CD4-positive, alpha-beta memory T cell (primary cell): ENCODE measurements at regions of chr16 and their contacts with region 1.

Region 1: DNA sequence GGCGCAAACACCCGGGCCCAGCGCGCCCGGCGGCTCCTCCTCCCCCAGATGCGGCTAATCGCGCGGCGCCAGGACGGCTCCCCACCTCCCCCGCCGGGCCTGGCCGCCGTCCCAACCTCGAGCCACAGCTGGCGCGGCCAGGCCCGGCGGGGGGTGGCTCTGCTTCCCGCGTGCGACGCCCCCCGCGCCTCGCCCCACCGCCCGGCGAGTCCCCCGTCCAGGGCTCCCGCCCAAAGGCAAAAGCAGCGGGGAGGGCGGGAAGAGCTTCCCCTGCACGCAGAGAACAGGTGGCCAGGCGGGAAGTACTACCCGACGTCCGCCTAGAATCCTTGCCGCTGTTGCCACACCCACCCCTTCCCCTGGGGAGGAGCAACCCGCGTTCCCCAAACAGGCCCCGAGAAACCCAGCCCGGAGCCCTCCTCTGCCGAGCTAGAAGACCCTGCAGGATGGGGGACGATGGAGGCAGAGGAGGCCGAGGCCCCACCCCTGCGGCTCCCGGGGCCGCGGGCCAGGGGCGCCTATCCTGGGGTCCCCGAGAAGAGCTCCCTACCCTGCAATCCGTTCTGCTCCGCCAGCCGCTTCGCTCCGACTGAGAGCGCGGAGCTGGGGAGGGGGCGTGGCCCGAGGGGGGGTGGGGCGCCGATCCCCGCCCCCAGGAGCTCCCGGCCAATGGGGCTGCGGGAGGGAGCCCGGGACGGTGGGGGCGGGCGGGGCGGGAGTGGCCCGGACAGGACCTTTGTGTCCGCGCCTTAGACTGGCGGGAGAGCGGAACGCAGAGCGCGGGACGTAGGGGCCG is at the start of gene CARHSP1:
- DNase-seq: peak; percentile 71 to 80 (median 77)
- H3K4me3 ChIP-seq: peak within 1 kb of the TSS; percentile 54 to 81
- H3K4me3 Mint-ChIP-seq: peak within 1 kb of the TSS; percentile 93 to 97 (median 94)
- H3K27ac ChIP-seq: peak within 1 kb of the TSS; percentile 54
- H3K27ac Mint-ChIP-seq: peak within 1 kb of the TSS; percentile 85 to 97 (median 93)
- H3K4me1 ChIP-seq: peaks cover 54% of the 10 kb centered on the region
- H3K4me1 Mint-ChIP-seq: peaks cover 25 to 57% (median 45%) of the 10 kb centered on the region in 4 donors
- H3K27me3 ChIP-seq: no peaks in the 10 kb centered on the region
- H3K27me3 Mint-ChIP-seq: no peaks in the 10 kb centered on the region
- total RNA-seq, gene CARHSP1: 39.3 to 43.2 TPM

Region 2: DNA sequence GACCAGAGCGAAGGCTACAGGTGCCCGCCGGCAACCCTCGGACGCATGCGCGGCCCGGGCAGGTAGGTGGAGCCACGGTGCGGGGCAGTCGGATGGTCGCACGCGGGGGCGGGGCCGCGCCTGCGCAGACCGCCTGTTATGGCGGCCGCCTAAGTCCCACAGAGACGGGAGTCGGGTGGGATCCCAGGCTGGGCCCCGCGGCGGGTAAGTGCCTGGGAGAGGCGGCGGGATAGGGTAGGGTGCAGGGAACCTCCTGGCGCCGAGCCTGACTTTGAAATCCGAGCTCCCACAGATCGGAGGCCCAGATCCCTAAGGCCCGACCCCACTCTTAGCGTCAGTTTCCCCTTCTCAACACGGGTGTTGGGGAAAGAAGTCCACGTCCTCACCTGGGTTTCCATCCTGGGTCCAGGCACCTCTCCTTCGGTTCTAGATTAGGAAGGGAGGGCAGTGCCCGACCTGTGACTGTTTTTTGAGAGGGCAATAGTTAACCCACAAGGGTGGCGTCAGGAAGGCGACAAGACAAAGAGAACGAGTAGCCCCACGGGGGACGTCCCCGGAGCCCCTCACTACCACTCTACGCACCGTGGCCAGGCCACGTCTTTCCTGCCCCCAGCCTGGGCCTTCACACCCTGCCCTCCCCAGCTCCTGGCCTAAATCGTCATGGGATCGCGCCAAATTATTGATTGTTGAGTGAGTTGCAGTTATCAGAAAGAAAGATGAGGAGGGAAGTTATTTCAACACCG is 246.9 kb before region 1 on chr16 and contains the start of gene METTL22:
- CTCF ChIA-PET with region 1: no interaction called
- POLR2A ChIA-PET with region 1: no interaction called
- intact Hi-C with region 1: loop called (anchors 1 kb)
- DNase-seq: peak; percentile 87 to 90 (median 90)
- H3K4me3 ChIP-seq: peak within 1 kb of the TSS; percentile 71 to 96
- H3K4me3 Mint-ChIP-seq: peak within 1 kb of the TSS; percentile 89 to 98 (median 94)
- H3K27ac ChIP-seq: peak within 1 kb of the TSS; percentile 92
- H3K27ac Mint-ChIP-seq: peak within 1 kb of the TSS; percentile 77 to 94 (median 91)
- H3K4me1 ChIP-seq: peaks cover 15% of the 10 kb centered on the region
- H3K4me1 Mint-ChIP-seq: peaks cover 11 to 32% (median 15%) of the 10 kb centered on the region in 4 donors
- H3K27me3 ChIP-seq: no peaks in the 10 kb centered on the region
- H3K27me3 Mint-ChIP-seq: peaks cover 0 to 5% of the 10 kb centered on the region in 2 donors
- total RNA-seq, gene METTL22: 42.9 to 49.8 TPM

Region 3: DNA sequence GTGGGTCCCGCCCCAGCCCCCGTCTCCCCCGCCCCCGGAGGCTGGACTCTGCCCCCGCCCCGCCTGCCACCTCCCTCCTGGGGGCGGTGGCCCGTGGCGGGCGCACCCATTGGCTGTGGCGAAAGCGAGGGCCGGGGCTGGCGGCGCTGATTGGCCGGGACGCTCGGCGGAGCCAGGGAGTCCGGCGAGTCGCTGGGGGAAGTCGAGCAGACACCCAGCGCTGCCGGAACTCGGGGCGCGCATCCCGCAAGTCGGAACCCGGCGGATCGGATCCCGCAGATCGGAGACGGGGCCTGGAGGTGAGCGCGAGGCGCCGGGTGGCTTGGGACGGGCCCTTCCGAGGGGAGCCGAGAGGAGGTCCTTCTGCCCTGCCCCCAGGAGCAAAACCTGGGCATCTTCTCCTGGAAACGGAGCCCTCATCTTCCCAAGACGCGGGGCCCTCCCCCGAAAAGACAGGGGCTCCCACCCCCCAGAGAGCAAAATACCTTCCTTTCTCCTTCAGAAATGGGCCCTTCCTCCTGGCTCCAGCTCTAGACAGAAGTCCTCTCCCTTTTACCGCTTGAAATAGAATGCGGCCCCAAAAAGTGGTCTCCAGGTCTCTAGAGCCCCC is 194.1 kb before region 1 on chr16 and contains the start of gene ABAT:
- CTCF ChIA-PET with region 1: interaction called, 4 read pairs
- POLR2A ChIA-PET with region 1: interaction called, 18 read pairs
- intact Hi-C with region 1: loop called (anchors 2 kb)
- DNase-seq: peak; percentile 85 to 92 (median 88)
- H3K4me3 ChIP-seq: peak within 1 kb of the TSS; percentile 85 to 87
- H3K4me3 Mint-ChIP-seq: peak within 1 kb of the TSS; percentile 87 to 95 (median 91)
- H3K27ac ChIP-seq: peak within 1 kb of the TSS; percentile 62
- H3K27ac Mint-ChIP-seq: peak within 1 kb of the TSS; percentile 87 to 98 (median 92)
- H3K4me1 ChIP-seq: peaks cover 17% of the 10 kb centered on the region
- H3K4me1 Mint-ChIP-seq: peaks cover 8 to 24% (median 16%) of the 10 kb centered on the region in 4 donors
- H3K27me3 ChIP-seq: no peaks in the 10 kb centered on the region
- H3K27me3 Mint-ChIP-seq: no peaks in the 10 kb centered on the region
- total RNA-seq, gene ABAT: 10.0 to 10.8 TPM

Region 4: GRCh38 chr16:8797364-8798173 is 71.0 kb before region 1 on chr16 and contains the starts of genes PMM2 and TMEM186:
- CTCF ChIA-PET with region 1: no interaction called
- POLR2A ChIA-PET with region 1: interaction called, 32 read pairs
- intact Hi-C with region 1: loop called (anchors 1 kb)
- DNase-seq: peak; percentile 93 to 97 (median 94)
- H3K4me3 ChIP-seq: peak within 1 kb of the TSS; percentile 73 to 97
- H3K4me3 Mint-ChIP-seq: peak within 1 kb of the TSS; percentile 93 to 98 (median 95)
- H3K27ac ChIP-seq: peak within 1 kb of the TSS; percentile 81
- H3K27ac Mint-ChIP-seq: peak within 1 kb of the TSS; percentile 88 to 97 (median 94)
- H3K4me1 ChIP-seq: peaks cover 44% of the 10 kb centered on the region
- H3K4me1 Mint-ChIP-seq: peaks cover 24 to 55% (median 33%) of the 10 kb centered on the region in 4 donors
- H3K27me3 ChIP-seq: no peaks in the 10 kb centered on the region
- H3K27me3 Mint-ChIP-seq: no peaks in the 10 kb centered on the region
- total RNA-seq, gene PMM2: 51.7 to 61.7 TPM
- total RNA-seq, gene TMEM186: 15.6 to 17.9 TPM

Region 5: GRCh38 chr16:8818504-8819270 is 49.9 kb before region 1 on chr16:
- CTCF ChIA-PET with region 1: interaction called, 3 read pairs
- POLR2A ChIA-PET with region 1: interaction called, 10 read pairs
- intact Hi-C with region 1: loop called (anchors 5 kb)
- DNase-seq: no peak
- H3K4me3 ChIP-seq: no peak overlapping the region
- H3K4me3 Mint-ChIP-seq: no peak overlapping the region
- H3K27ac ChIP-seq: no peak overlapping the region
- H3K27ac Mint-ChIP-seq: peak overlapping the region in 1 of 7 donors; percentile 80
- H3K4me1 ChIP-seq: peaks cover 13% of the 10 kb centered on the region
- H3K4me1 Mint-ChIP-seq: peaks cover 11 to 38% (median 28%) of the 10 kb centered on the region in 4 donors
- H3K27me3 ChIP-seq: no peaks in the 10 kb centered on the region
- H3K27me3 Mint-ChIP-seq: no peaks in the 10 kb centered on the region

Region 6: GRCh38 chr16:8850279-8850885 is 18.2 kb before region 1 on chr16:
- CTCF ChIA-PET with region 1: interaction called, 3 read pairs
- POLR2A ChIA-PET with region 1: interaction called, 16 read pairs
- intact Hi-C with region 1: no loop called
- DNase-seq: no peak
- H3K4me3 ChIP-seq: no peak overlapping the region
- H3K4me3 Mint-ChIP-seq: peak overlapping the region in 1 of 8 donors; percentile 20
- H3K27ac ChIP-seq: no peak overlapping the region
- H3K27ac Mint-ChIP-seq: peak overlapping the region; percentile 22 to 94 (median 84)
- H3K4me1 ChIP-seq: peaks cover 11% of the 10 kb centered on the region
- H3K4me1 Mint-ChIP-seq: peaks cover 17 to 37% (median 25%) of the 10 kb centered on the region in 4 donors
- H3K27me3 ChIP-seq: no peaks in the 10 kb centered on the region
- H3K27me3 Mint-ChIP-seq: no peaks in the 10 kb centered on the region

Region 7: GRCh38 chr16:9225611-9226316 is 357.1 kb after region 1 on chr16:
- CTCF ChIA-PET with region 1: no interaction called
- POLR2A ChIA-PET with region 1: no interaction called
- intact Hi-C with region 1: no loop called
- DNase-seq: no peak
- H3K4me3 ChIP-seq: no peak overlapping the region
- H3K4me3 Mint-ChIP-seq: no peak overlapping the region
- H3K27ac ChIP-seq: no peak overlapping the region
- H3K27ac Mint-ChIP-seq: no peak overlapping the region
- H3K4me1 ChIP-seq: no peaks in the 10 kb centered on the region
- H3K4me1 Mint-ChIP-seq: no peaks in the 10 kb centered on the region
- H3K27me3 ChIP-seq: no peaks in the 10 kb centered on the region
- H3K27me3 Mint-ChIP-seq: peaks cover 6 to 7% of the 10 kb centered on the region in 2 donors

Region 8: GRCh38 chr16:9330095-9330494 is 461.5 kb after region 1 on chr16:
- CTCF ChIA-PET with region 1: no interaction called
- POLR2A ChIA-PET with region 1: no interaction called
- intact Hi-C with region 1: no loop called
- DNase-seq: no peak
- H3K4me3 ChIP-seq: no peak overlapping the region
- H3K4me3 Mint-ChIP-seq: no peak overlapping the region
- H3K27ac ChIP-seq: no peak overlapping the region
- H3K27ac Mint-ChIP-seq: no peak overlapping the region
- H3K4me1 ChIP-seq: no peaks in the 10 kb centered on the region
- H3K4me1 Mint-ChIP-seq: no peaks in the 10 kb centered on the region
- H3K27me3 ChIP-seq: no peaks in the 10 kb centered on the region
- H3K27me3 Mint-ChIP-seq: peaks cover 0 to 4% of the 10 kb centered on the region in 2 donors

Region 9: GRCh38 chr16:10743610-10744393 is 1875.2 kb after region 1 on chr16 and contains the start of gene NUBP1:
- CTCF ChIA-PET with region 1: no interaction called
- POLR2A ChIA-PET with region 1: no interaction called
- intact Hi-C with region 1: loop called (anchors 2 kb)
- DNase-seq: peak; percentile 98 to 100 (median 98)
- H3K4me3 ChIP-seq: peak within 1 kb of the TSS; percentile 63 to 81
- H3K4me3 Mint-ChIP-seq: peak within 1 kb of the TSS; percentile 90 to 97 (median 95)
- H3K27ac ChIP-seq: peak within 1 kb of the TSS; percentile 92
- H3K27ac Mint-ChIP-seq: peak within 1 kb of the TSS; percentile 93 to 100 (median 99)
- H3K4me1 ChIP-seq: peaks cover 19% of the 10 kb centered on the region
- H3K4me1 Mint-ChIP-seq: peaks cover 16 to 30% (median 24%) of the 10 kb centered on the region in 4 donors
- H3K27me3 ChIP-seq: no peaks in the 10 kb centered on the region
- H3K27me3 Mint-ChIP-seq: no peaks in the 10 kb centered on the region
- total RNA-seq, gene NUBP1: 23.5 to 28.4 TPM